Head of caudate nucleus (tissue), 42 donors: ENCODE measurements at regions of chr3 and their contacts with region 1.

Region 1: GRCh38 chr3:46705022-46705530 is 3.9 kb downstream of the TMIE start:
- DNase-seq: peak; percentile 41 to 91 (median 78)

Region 2: GRCh38 chr3:46866720-46867549 is 161.9 kb after region 1 on chr3:
- intact Hi-C with region 1: loop called (anchors 10 kb)
- DNase-seq: peak; percentile 61 to 95 (median 84)

Region 3: GRCh38 chr3:46909535-46910442 is 204.7 kb after region 1 on chr3:
- intact Hi-C with region 1: loop called (anchors 5 kb)
- DNase-seq: peak; percentile 77 to 94 (median 88)

Region 4: DNA sequence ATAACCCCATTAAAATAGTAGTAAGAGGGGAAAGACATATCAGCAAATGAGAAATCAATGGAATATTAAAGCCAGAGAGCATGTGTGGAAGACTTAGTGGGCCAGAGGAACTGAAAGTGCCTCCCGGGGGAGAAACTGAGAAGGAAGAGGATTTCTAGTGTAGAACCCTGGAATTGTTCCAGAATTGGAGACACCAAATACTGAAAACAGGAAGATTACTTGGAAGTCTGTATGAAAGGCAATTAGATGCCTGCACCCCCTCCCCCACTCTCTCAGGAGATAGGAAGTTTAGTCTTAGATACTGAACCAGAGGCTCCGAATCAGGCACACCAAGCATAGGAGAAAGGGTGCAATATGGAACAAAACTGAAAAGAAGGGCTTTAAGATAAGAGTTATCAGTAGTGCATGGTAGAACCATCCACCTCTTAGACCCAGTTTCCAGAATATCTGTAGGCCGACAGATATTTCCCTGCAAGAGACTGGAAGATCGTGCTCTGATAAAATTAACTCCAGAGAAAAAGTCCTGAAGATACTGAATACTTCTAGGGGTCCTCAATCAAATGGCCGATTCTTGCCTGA is 610.1 kb after region 1 on chr3:
- intact Hi-C with region 1: loop called (anchors 10 kb)
- DNase-seq: peak in 17 of 42 donors; percentile 7 to 50 (median 20)